Psoas muscle (tissue), 8 donors: ENCODE measurements at regions of chr9 and their contacts with region 1.

Region 1: DNA sequence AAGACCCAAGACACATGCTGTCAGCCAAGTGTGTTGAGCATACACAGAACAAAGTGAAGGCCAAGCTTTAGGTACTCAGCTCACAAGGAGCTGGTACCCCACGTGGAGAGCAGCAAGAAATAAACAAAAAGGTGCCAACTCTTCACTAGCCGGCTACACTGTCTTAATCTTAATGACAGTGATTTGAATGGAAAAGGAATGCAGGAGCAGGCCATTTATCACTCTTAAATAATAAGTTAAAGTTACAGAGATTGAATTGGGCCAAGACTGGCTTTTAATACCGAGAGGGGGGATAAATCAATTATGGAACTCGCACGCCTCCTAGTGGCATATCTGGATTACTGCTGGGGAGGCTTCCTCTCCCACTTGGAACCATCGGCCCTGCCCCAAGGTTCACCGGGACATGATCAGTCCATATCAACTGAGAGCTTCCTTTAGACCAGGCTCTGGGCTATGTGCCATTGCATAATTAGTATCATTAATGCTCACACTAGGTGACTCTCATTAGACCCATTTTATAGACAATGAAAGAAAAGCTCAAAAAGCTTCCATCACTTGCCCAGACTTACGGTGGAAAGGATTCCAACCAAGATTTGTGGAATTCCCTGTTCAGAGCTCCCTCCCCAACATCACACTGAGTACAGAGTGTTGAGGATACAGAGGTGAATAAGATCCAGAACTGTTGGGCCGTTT is 94.0 kb downstream of the ACTL7B start:
- DNase-seq: peak; percentile 25 to 59
- ATAC-seq: peak; percentile 63 to 92 (median 78)
- H3K4me3 ChIP-seq: no peak overlapping the region
- H3K27ac ChIP-seq: no peak overlapping the region
- H3K4me1 ChIP-seq: no peaks in the 10 kb centered on the region
- H3K27me3 ChIP-seq: no peaks in the 10 kb centered on the region
- CTCF ChIP-seq: peak; percentile 88

Region 2: DNA sequence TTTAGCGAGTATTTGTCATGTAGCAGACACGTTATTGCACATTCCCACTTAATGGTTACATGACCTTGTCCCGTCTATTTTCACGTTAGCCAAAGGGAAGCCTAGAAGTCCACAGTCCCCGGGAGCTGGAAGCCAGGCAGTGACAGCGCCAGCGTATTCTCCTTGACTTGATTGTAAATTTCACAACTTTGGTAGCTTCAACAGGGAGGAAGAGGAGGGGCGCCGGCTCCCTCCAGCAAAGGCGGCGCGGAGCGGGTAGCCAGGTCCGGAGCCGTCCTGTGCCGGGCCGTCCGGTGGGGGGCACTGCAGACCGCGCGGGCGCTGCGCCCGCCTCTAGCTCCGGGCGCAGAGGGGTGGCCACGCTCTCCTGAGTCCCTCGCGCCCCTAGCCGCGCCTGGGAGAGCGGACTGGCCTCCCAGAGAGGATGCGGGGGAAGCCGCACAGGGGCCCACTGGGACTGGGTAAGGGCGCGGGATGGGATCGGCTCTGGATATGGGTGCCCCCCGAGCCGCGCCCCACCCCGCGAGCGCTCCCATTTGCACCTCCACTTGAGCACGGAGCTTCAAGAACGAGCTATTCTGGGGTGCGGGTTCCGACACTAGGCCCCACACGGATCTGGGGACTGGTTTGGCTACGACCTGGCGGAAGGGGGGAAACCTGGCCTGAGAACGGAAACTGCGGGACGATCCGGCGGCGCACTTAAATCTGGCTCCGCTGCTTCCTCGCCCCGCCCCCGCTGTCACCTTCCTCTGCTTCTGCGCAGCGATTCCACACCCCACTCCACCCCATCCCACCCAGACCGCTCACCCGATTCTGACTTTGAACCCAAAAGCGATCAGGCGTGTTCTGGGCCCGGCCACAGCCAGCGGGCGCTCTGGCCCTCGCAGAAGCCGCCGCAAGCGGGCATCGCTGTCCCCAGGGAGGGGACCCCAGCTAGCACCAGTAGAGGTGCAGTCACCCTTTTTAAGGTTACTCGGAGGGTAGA is 1296.0 kb before region 1 on chr9:
- intact Hi-C with region 1: loop called (anchors 5 kb)
- DNase-seq: peak; percentile 81 to 88
- ATAC-seq: peak; percentile 97 to 100 (median 99)
- H3K4me3 ChIP-seq: peak overlapping the region; percentile 75
- H3K27ac ChIP-seq: no peak overlapping the region
- H3K4me1 ChIP-seq: peaks cover 5% of the 10 kb centered on the region
- H3K27me3 ChIP-seq: peaks cover 0 to 7% (median 0%) of the 10 kb centered on the region in 3 donors
- CTCF ChIP-seq: peak; percentile 91

Region 3: GRCh38 chr9:108049026-108049591 is 712.7 kb before region 1 on chr9:
- intact Hi-C with region 1: no loop called
- DNase-seq: no peak
- ATAC-seq: peak in 2 of 4 donors; percentile 44 to 55
- H3K4me3 ChIP-seq: no peak overlapping the region
- H3K27ac ChIP-seq: no peak overlapping the region
- H3K4me1 ChIP-seq: peaks cover 15% of the 10 kb centered on the region
- H3K27me3 ChIP-seq: no peaks in the 10 kb centered on the region
- CTCF ChIP-seq: no peak